ENCODE measurements at regions of chr2 and their contacts with region 1.

Region 1: GRCh38 chr2:120312861-120313694 is 32.9 kb upstream of the INHBB start:
- DNase-seq: peak; percentile 82 to 93 (median 91)
- ATAC-seq: peak; percentile 76 to 80
- H3K4me3 ChIP-seq: peak overlapping the region; percentile 69
- H3K27ac ChIP-seq: no peak overlapping the region
- H3K4me1 ChIP-seq: no peaks in the 10 kb centered on the region
- H3K27me3 ChIP-seq: no peaks in the 10 kb centered on the region

Region 2: DNA sequence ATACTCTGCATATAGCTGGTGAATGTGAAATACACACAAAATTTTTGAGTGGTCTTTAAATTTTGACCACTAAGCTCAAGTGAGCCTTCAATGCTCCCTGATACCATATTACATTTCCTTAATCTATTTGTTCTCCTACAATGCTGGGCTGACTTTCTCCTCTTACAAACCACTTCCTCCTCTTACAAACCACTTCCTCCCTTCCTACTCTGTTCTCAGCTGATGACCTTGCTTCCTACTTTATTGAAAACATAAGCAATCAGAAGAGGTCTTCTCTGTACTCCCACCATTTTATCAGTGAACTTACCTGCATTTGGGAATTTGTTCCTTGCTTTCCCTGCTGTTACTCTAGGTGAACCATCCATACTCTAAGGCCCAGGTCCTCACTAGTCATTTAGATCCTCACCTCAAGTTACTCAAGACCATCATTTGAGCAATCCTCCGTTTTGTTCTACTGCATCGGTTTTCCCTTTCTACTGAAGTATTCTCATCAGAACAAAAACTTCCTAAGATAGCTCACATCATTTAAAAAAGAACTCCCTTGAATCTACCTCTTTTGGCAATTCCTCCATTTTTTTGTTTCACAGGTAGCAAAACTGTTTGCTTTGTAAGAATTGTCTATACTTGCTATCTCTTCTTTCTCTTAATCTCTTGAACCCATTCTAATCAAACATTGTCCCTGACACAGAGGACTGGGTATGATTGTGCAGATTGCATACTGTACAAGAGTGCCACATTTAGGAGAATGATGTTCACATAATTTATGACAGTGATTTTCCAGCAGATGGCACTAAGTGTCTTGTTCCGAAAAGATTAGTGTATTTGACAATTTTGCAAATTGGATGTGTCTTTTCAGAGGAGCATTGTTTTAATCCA is 203.7 kb before region 1 on chr2:
- intact Hi-C with region 1: loop called in 1 of 4 experiments (anchors 5 kb)
- DNase-seq: no peak
- ATAC-seq: peak; percentile 48 to 53
- H3K4me3 ChIP-seq: no peak overlapping the region
- H3K27ac ChIP-seq: no peak overlapping the region
- H3K4me1 ChIP-seq: no peaks in the 10 kb centered on the region
- H3K27me3 ChIP-seq: no peaks in the 10 kb centered on the region

Region 3: DNA sequence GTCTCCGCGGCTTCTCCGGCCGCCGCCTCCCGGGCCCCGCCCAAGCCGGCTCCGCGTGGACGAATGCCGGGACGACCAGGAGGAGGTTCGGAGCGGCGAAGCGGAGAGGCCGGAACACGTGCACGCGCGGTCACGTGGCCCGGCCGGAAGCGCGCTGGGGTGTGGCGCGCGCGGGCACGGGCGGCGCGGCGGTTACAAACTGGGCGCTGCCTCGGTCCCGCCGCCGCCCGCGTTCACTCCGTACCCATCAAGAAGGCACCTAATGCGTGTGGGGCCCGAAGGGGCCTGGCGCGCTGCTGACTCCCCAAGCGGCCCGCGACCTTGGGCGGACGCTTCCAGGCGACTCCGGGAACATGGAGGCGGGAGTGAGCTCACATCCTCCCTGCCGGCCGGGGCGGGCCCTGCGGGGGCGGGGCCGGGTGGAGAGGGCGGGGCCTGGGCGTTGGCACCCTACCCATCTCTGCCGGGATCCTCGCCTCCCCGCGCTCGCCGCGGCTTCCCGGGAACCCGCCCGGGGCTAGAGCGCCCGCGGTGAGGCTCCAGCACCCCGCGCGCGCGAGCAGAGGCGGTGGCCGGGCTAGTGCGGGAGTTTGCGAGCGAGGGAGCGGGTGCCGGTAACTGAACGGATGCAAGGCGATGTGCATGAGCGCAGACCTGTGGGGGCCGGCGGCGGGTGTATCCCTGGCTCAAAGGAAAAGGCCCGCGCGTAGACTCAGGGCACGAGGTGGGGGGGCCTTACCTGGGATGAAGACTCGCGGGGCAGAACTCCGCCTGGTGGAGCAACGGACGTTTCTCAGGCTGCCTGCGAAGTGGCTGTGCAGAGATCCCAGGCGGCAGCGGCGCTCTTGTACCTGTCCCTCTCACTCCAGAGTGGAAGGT is 89.8 kb before region 1 on chr2 and contains the start of gene TMEM185B:
- intact Hi-C with region 1: loop called in 1 of 4 experiments (anchors 10 kb)
- DNase-seq: peak; percentile 90 to 97 (median 95)
- ATAC-seq: peak; percentile 97 to 98
- H3K4me3 ChIP-seq: peak within 1 kb of the TSS; percentile 77
- H3K27ac ChIP-seq: peak within 1 kb of the TSS; percentile 85
- H3K4me1 ChIP-seq: no peaks in the 10 kb centered on the region
- H3K27me3 ChIP-seq: no peaks in the 10 kb centered on the region
- total RNA-seq, gene TMEM185B: 19.7 to 27.5 (median 21.7) TPM

Region 4: GRCh38 chr2:120252225-120253021 is 60.7 kb before region 1 on chr2 and contains the start of gene RALB:
- intact Hi-C with region 1: loop called in 1 of 4 experiments (anchors 10 kb)
- DNase-seq: peak; percentile 100
- ATAC-seq: peak; percentile 96 to 98
- H3K4me3 ChIP-seq: peak within 1 kb of the TSS; percentile 72
- H3K27ac ChIP-seq: peak within 1 kb of the TSS; percentile 92
- H3K4me1 ChIP-seq: peaks cover 16% of the 10 kb centered on the region
- H3K27me3 ChIP-seq: no peaks in the 10 kb centered on the region
- total RNA-seq, gene RALB: 44.2 to 57.0 (median 48.1) TPM